CD4-positive, alpha-beta memory T cell (primary cell): ENCODE measurements at regions of chr11 and their contacts with region 1.

Region 1: DNA sequence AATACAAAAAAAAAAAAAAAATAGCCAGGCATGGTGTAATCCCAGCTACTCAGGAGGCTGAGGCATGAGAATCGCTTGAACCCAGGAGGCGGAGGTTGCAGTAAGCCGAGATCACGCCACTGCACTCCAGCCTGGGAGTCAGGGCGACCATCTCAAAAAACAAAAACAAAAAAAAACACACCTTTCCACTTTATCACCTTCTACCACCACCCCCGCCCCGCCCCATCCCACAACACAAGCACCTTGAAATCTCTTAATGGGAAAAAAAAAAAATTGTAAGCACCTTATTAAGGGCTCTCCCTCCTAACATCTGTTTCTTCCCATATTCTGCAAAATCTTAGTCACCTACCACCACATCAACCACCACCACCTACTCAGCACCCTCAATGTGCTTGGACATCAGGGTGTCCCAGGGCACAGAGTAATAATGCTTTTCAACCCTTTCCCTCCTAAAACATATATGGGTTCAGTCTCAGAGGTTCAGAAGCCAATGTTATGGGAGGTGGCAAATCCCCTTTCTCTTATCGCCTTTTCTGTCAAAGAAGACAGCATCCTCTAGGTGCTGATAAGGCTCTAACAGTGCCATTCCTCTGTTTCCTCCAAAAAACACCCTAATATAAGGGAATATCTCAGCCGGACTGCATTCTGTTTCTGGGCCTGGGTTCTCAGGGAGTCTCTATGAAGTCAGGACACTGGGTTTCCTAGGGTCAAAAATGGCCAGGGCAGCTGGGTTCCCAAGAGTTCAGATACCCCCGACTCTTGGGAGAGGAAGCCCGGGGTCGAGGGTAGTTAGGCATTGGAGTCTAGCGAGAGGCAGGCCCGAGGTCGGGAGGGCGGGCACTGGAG is 718 bp downstream of the INTS5 start:
- DNase-seq: peak in 3 of 5 donors; percentile 54 to 83 (median 68)
- H3K4me3 ChIP-seq: peak overlapping the region; percentile 92 to 97
- H3K4me3 Mint-ChIP-seq: peak overlapping the region; percentile 86 to 94 (median 92)
- H3K27ac ChIP-seq: peak overlapping the region; percentile 93
- H3K27ac Mint-ChIP-seq: peak overlapping the region; percentile 78 to 100 (median 94)
- H3K4me1 ChIP-seq: peaks cover 24% of the 10 kb centered on the region
- H3K4me1 Mint-ChIP-seq: peaks cover 13 to 40% (median 22%) of the 10 kb centered on the region in 4 donors
- H3K27me3 ChIP-seq: no peaks in the 10 kb centered on the region
- H3K27me3 Mint-ChIP-seq: no peaks in the 10 kb centered on the region

Region 2: GRCh38 chr11:62601394-62602140 is 50.8 kb before region 1 on chr11 and contains the start of gene MTA2:
- CTCF ChIA-PET with region 1: interaction called, 4 read pairs
- POLR2A ChIA-PET with region 1: interaction called, 24 read pairs
- intact Hi-C with region 1: no loop called
- DNase-seq: peak; percentile 99 to 100 (median 100)
- H3K4me3 ChIP-seq: peak within 1 kb of the TSS; percentile 71 to 82
- H3K4me3 Mint-ChIP-seq: peak within 1 kb of the TSS; percentile 91 to 99 (median 96)
- H3K27ac ChIP-seq: peak within 1 kb of the TSS; percentile 91
- H3K27ac Mint-ChIP-seq: peak within 1 kb of the TSS; percentile 90 to 99 (median 98)
- H3K4me1 ChIP-seq: peaks cover 35% of the 10 kb centered on the region
- H3K4me1 Mint-ChIP-seq: peaks cover 33 to 60% (median 46%) of the 10 kb centered on the region in 4 donors
- H3K27me3 ChIP-seq: no peaks in the 10 kb centered on the region
- H3K27me3 Mint-ChIP-seq: no peaks in the 10 kb centered on the region
- total RNA-seq, gene MTA2: 207 to 210 TPM

Region 3: GRCh38 chr11:62612366-62613290 is 39.8 kb before region 1 on chr11 and contains the starts of genes EML3 and ROM1:
- CTCF ChIA-PET with region 1: interaction called, 5 read pairs
- POLR2A ChIA-PET with region 1: interaction called, 22 read pairs
- intact Hi-C with region 1: no loop called
- DNase-seq: peak; percentile 85 to 88 (median 86)
- H3K4me3 ChIP-seq: peak within 1 kb of the TSS; percentile 73 to 93
- H3K4me3 Mint-ChIP-seq: peak within 1 kb of the TSS; percentile 89 to 100 (median 96)
- H3K27ac ChIP-seq: peak within 1 kb of the TSS; percentile 90
- H3K27ac Mint-ChIP-seq: peak within 1 kb of the TSS; percentile 94 to 98 (median 96)
- H3K4me1 ChIP-seq: peaks cover 59% of the 10 kb centered on the region
- H3K4me1 Mint-ChIP-seq: peaks cover 15 to 53% (median 38%) of the 10 kb centered on the region in 4 donors
- H3K27me3 ChIP-seq: no peaks in the 10 kb centered on the region
- H3K27me3 Mint-ChIP-seq: no peaks in the 10 kb centered on the region
- total RNA-seq, gene EML3: 192 to 201 TPM
- total RNA-seq, gene ROM1: 1.6 to 1.9 TPM

Region 4: GRCh38 chr11:62621567-62622470 is 30.6 kb before region 1 on chr11 and contains the start of gene B3GAT3:
- CTCF ChIA-PET with region 1: interaction called, 4 read pairs
- POLR2A ChIA-PET with region 1: interaction called, 29 read pairs
- intact Hi-C with region 1: loop called (anchors 1 kb)
- DNase-seq: peak; percentile 95 to 99 (median 96)
- H3K4me3 ChIP-seq: peak within 1 kb of the TSS; percentile 83 to 89
- H3K4me3 Mint-ChIP-seq: peak within 1 kb of the TSS; percentile 89 to 98 (median 95)
- H3K27ac ChIP-seq: peak within 1 kb of the TSS; percentile 94
- H3K27ac Mint-ChIP-seq: peak within 1 kb of the TSS; percentile 91 to 99 (median 98)
- H3K4me1 ChIP-seq: peaks cover 26% of the 10 kb centered on the region
- H3K4me1 Mint-ChIP-seq: peaks cover 19 to 29% (median 20%) of the 10 kb centered on the region in 4 donors
- H3K27me3 ChIP-seq: no peaks in the 10 kb centered on the region
- H3K27me3 Mint-ChIP-seq: no peaks in the 10 kb centered on the region
- total RNA-seq, gene B3GAT3: 66.3 to 74.3 TPM

Region 5: DNA sequence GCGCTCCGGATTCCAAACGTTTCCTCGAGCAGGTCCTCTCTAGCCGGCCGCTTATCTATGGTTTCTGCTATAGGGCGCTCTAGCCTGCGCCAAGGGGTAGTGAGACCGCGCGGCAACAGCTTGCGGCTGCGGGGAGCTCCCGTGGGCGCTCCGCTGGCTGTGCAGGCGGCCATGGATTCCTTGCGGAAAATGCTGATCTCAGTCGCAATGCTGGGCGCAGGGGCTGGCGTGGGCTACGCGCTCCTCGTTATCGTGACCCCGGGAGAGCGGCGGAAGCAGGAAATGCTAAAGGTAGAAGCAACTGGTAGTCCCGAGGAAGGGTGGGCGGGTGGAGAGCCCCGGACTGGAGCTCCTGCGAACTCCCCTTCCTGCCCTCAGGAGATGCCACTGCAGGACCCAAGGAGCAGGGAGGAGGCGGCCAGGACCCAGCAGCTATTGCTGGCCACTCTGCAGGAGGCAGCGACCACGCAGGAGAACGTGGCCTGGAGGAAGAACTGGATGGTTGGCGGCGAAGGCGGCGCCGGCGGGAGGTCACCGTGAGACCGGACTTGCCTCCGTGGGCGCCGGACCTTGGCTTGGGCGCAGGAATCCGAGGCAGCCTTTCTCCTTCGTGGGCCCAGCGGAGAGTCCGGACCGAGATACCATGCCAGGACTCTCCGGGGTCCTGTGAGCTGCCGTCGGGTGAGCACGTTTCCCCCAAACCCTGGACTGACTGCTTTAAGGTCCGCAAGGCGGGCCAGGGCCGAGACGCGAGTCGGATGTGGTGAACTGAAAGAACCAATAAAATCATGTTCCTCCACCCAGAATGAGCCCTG is 19.4 kb after region 1 on chr11 and contains the starts of genes LBHD1 and UQCC3:
- CTCF ChIA-PET with region 1: interaction called, 6 read pairs
- POLR2A ChIA-PET with region 1: interaction called, 162 read pairs
- intact Hi-C with region 1: loop called (anchors 2 kb)
- DNase-seq: peak; percentile 68 to 80 (median 75)
- H3K4me3 ChIP-seq: peak within 1 kb of the TSS; percentile 91 to 97
- H3K4me3 Mint-ChIP-seq: peak within 1 kb of the TSS; percentile 93 to 99 (median 99)
- H3K27ac ChIP-seq: peak within 1 kb of the TSS; percentile 74
- H3K27ac Mint-ChIP-seq: peak within 1 kb of the TSS; percentile 89 to 98 (median 97)
- H3K4me1 ChIP-seq: peaks cover 55% of the 10 kb centered on the region
- H3K4me1 Mint-ChIP-seq: peaks cover 14 to 74% (median 43%) of the 10 kb centered on the region in 4 donors
- H3K27me3 ChIP-seq: no peaks in the 10 kb centered on the region
- H3K27me3 Mint-ChIP-seq: no peaks in the 10 kb centered on the region
- total RNA-seq, gene LBHD1: 26.7 to 28.6 TPM
- total RNA-seq, gene UQCC3: 7.2 to 8.5 TPM

Region 6: GRCh38 chr11:62678770-62679696 is 26.6 kb after region 1 on chr11 and contains the start of gene UBXN1:
- CTCF ChIA-PET with region 1: interaction called, 3 read pairs
- POLR2A ChIA-PET with region 1: interaction called, 69 read pairs
- intact Hi-C with region 1: loop called (anchors 2 kb)
- DNase-seq: peak; percentile 80 to 90 (median 82)
- H3K4me3 ChIP-seq: peak within 1 kb of the TSS; percentile 58 to 95
- H3K4me3 Mint-ChIP-seq: peak within 1 kb of the TSS; percentile 87 to 98 (median 92)
- H3K27ac ChIP-seq: peak within 1 kb of the TSS; percentile 98
- H3K27ac Mint-ChIP-seq: peak within 1 kb of the TSS; percentile 86 to 99 (median 95)
- H3K4me1 ChIP-seq: peaks cover 37% of the 10 kb centered on the region
- H3K4me1 Mint-ChIP-seq: peaks cover 16 to 50% (median 31%) of the 10 kb centered on the region in 4 donors
- H3K27me3 ChIP-seq: no peaks in the 10 kb centered on the region
- H3K27me3 Mint-ChIP-seq: no peaks in the 10 kb centered on the region
- total RNA-seq, gene UBXN1: 178 to 185 TPM